Naive thymus-derived CD4-positive, alpha-beta T cell (primary cell): ENCODE measurements at regions of chr6 and their contacts with region 1.

Region 1: DNA sequence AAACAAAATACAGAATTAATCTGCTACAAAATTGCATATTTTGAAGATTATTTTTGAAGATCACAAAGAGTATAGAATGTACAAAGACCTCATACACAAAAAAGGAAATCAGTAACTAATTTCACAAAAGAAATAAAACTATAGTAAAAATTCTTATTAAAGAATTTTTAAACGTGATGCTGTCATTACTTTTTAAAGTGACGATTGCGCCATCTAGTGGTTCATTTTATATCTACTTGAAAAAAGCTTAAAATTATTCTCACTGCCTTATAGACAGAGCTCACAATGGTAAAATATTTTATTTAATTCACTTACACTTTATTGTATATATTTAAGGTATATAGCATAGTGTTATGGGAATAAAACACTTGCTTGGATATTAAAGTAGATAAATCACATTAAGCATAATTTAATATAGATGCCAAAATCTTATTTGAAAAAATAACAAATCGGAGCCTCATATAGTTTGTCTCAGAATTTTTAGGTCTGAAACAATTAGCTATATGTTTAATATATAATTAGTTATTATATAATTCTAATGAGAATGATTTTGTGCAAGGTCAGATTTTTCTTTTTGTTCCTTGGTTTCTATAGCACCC is 128.8 kb downstream of the PHF3 start:
- DNase-seq: peak in 7 of 9 donors; percentile 10 to 52 (median 49)
- ATAC-seq: peak; percentile 50
- H3K4me3 ChIP-seq: no peak overlapping the region
- H3K4me3 Mint-ChIP-seq: no peak overlapping the region
- H3K27ac ChIP-seq: no peak overlapping the region
- H3K27ac Mint-ChIP-seq: no peak overlapping the region
- H3K4me1 ChIP-seq: no peaks in the 10 kb centered on the region
- H3K4me1 Mint-ChIP-seq: no peaks in the 10 kb centered on the region
- H3K27me3 ChIP-seq: no peaks in the 10 kb centered on the region
- H3K27me3 Mint-ChIP-seq: peaks cover 0 to 17% (median 5%) of the 10 kb centered on the region in 5 donors

Region 2: DNA sequence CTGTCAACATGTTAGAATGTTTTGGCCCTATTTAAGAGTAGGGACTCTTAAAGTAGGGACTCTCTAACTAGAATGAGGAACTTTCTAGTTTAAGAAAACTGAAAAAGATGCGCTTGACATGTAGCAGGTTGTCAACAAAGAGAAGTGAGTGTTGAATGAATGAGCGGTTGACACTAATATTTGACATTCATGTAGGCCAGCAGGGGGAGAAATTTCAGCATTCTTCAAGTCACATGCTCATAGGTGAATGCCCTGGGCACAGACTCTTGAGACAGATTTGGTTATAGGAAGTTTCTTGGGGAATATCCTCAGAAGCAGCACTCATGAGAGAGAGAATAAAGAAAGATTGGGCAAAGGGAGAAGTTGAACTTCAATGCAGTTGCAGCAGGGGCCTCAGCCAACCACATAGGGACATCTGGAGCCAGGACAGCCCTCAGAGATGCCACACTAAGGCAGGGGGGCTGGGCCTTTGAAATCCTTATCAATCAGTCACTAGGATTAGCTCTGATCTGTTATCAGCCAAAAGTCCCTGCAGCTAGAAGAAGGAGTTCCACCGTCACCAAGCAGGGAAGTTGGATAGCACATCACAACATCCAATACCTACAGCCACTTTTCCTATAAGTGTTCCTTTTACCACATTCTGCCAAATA is 698.2 kb before region 1 on chr6:
- CTCF ChIA-PET with region 1: no interaction called
- POLR2A ChIA-PET with region 1: no interaction called
- intact Hi-C with region 1: loop called in 1 of 2 experiments (anchors 10 kb)
- DNase-seq: no peak
- ATAC-seq: no peak
- H3K4me3 ChIP-seq: no peak overlapping the region
- H3K4me3 Mint-ChIP-seq: no peak overlapping the region
- H3K27ac ChIP-seq: no peak overlapping the region
- H3K27ac Mint-ChIP-seq: no peak overlapping the region
- H3K4me1 ChIP-seq: no peaks in the 10 kb centered on the region
- H3K4me1 Mint-ChIP-seq: no peaks in the 10 kb centered on the region
- H3K27me3 ChIP-seq: no peaks in the 10 kb centered on the region
- H3K27me3 Mint-ChIP-seq: no peaks in the 10 kb centered on the region

Region 3: GRCh38 chr6:63352587-63353285 is 411.7 kb before region 1 on chr6:
- CTCF ChIA-PET with region 1: interaction called, 3 read pairs
- POLR2A ChIA-PET with region 1: no interaction called
- intact Hi-C with region 1: loop called in 1 of 2 experiments (anchors 1 kb)
- DNase-seq: no peak
- ATAC-seq: peak; percentile 86
- H3K4me3 ChIP-seq: no peak overlapping the region
- H3K4me3 Mint-ChIP-seq: peak overlapping the region in 2 of 10 donors; percentile 22 to 66
- H3K27ac ChIP-seq: no peak overlapping the region
- H3K27ac Mint-ChIP-seq: peak overlapping the region in 2 of 9 donors; percentile 13 to 48
- H3K4me1 ChIP-seq: no peaks in the 10 kb centered on the region
- H3K4me1 Mint-ChIP-seq: peaks cover 0 to 15% (median 7%) of the 10 kb centered on the region in 7 donors
- H3K27me3 ChIP-seq: no peaks in the 10 kb centered on the region
- H3K27me3 Mint-ChIP-seq: peaks cover 10 to 27% (median 21%) of the 10 kb centered on the region in 5 donors

Region 4: DNA sequence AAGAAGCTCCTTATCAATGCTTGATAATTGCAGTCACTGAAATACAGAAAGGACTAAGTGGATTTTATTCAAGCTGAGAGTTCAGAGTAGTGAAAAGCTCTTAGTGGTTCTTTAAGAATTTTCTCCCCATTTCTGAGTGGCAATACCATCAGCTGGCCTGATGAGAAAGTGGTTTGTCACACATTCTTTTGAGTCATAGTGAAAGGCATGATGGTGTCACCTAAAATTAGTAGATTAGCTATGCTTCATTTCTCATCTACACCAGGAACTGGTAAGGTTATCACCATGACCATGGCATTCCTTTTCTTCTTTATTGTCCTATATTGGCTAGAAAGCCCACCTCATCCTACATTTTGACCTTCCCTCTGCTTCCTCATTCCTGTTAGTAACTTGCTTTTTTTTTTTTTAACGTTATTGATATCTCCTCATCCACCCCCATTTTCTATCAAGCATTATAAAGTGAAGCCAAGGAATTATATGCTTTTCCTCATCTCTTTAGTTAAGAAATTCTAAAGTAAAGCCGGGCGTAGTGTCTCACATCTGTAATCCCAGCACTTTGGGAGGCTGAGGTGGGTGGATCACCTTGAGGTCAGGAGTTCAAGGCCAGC is 259.5 kb before region 1 on chr6:
- CTCF ChIA-PET with region 1: no interaction called
- POLR2A ChIA-PET with region 1: no interaction called
- intact Hi-C with region 1: loop called in 1 of 2 experiments (anchors 2 kb)
- DNase-seq: no peak
- ATAC-seq: no peak
- H3K4me3 ChIP-seq: no peak overlapping the region
- H3K4me3 Mint-ChIP-seq: no peak overlapping the region
- H3K27ac ChIP-seq: no peak overlapping the region
- H3K27ac Mint-ChIP-seq: no peak overlapping the region
- H3K4me1 ChIP-seq: no peaks in the 10 kb centered on the region
- H3K4me1 Mint-ChIP-seq: peaks cover 0 to 11% (median 0%) of the 10 kb centered on the region in 7 donors
- H3K27me3 ChIP-seq: no peaks in the 10 kb centered on the region
- H3K27me3 Mint-ChIP-seq: peaks cover 0 to 7% (median 0%) of the 10 kb centered on the region in 5 donors